CD8-positive, alpha-beta T cell (primary cell): ENCODE measurements at regions of chr4 and their contacts with region 1.

Region 1: DNA sequence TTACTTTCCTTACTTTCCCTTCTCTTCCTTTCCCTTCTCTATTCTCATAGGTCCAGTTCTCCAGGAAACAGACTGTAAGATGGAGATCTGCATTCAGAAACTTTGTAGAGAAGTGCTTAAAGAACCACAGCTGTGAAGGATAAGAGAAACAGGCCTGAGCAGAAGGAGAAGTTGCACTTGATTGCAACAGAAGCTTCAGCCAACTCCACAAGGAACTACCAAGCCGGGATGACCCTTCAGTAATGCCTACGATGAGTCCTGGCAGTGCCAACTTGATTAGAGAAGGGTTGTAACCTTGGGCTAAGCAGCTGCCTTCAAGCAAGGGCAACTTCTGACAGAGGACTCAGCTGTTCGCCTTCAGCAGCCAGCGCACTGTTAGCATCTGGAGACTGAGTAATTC is 413.3 kb upstream of the RASGEF1B start:
- DNase-seq: no peak
- ATAC-seq: no peak
- H3K4me3 ChIP-seq: no peak overlapping the region
- H3K4me3 Mint-ChIP-seq: no peak overlapping the region
- H3K27ac ChIP-seq: no peak overlapping the region
- H3K27ac Mint-ChIP-seq: no peak overlapping the region
- H3K4me1 ChIP-seq: no peaks in the 10 kb centered on the region
- H3K4me1 Mint-ChIP-seq: peaks cover 9% of the 10 kb centered on the region
- H3K27me3 ChIP-seq: no peaks in the 10 kb centered on the region
- H3K27me3 Mint-ChIP-seq: peaks cover 16% of the 10 kb centered on the region
- CTCF ChIP-seq: no peak

Region 2: GRCh38 chr4:80335554-80336358 is 1549.2 kb before region 1 on chr4 and contains the start of gene CFAP299:
- CTCF ChIA-PET with region 1: no interaction called
- POLR2A ChIA-PET with region 1: no interaction called
- intact Hi-C with region 1: no loop called
- DNase-seq: peak in 8 of 9 experiments; percentile 14 to 66 (median 35)
- ATAC-seq: peak; percentile 55
- H3K4me3 ChIP-seq: peak within 1 kb of the TSS; percentile 48 to 56
- H3K4me3 Mint-ChIP-seq: peak within 1 kb of the TSS; percentile 87
- H3K27ac ChIP-seq: no peak within 1 kb of the TSS
- H3K27ac Mint-ChIP-seq: no peak within 1 kb of the TSS
- H3K4me1 ChIP-seq: peaks cover 5% of the 10 kb centered on the region
- H3K4me1 Mint-ChIP-seq: peaks cover 14% of the 10 kb centered on the region
- H3K27me3 ChIP-seq: peaks cover 0 to 7% of the 10 kb centered on the region in 2 experiments
- H3K27me3 Mint-ChIP-seq: peaks cover 18% of the 10 kb centered on the region
- CTCF ChIP-seq: no peak
- total RNA-seq, gene CFAP299: not detected

Region 3: GRCh38 chr4:81896936-81897335 is 11.9 kb after region 1 on chr4:
- CTCF ChIA-PET with region 1: no interaction called
- POLR2A ChIA-PET with region 1: no interaction called
- intact Hi-C with region 1: loop called in 1 of 2 experiments (anchors 1 kb)
- DNase-seq: no peak
- ATAC-seq: no peak
- H3K4me3 ChIP-seq: no peak overlapping the region
- H3K4me3 Mint-ChIP-seq: no peak overlapping the region
- H3K27ac ChIP-seq: no peak overlapping the region
- H3K27ac Mint-ChIP-seq: no peak overlapping the region
- H3K4me1 ChIP-seq: no peaks in the 10 kb centered on the region
- H3K4me1 Mint-ChIP-seq: peaks cover 4% of the 10 kb centered on the region
- H3K27me3 ChIP-seq: no peaks in the 10 kb centered on the region
- H3K27me3 Mint-ChIP-seq: peaks cover 8% of the 10 kb centered on the region
- CTCF ChIP-seq: no peak